ENCODE measurements at regions of chr1 and their contacts with region 1.

Region 1: GRCh38 chr1:234533975-234534876 is 55.2 kb upstream of the TARBP1 start:
- DNase-seq: peak; percentile 100
- H3K4me3 Mint-ChIP-seq: peak overlapping the region; percentile 31
- H3K27ac Mint-ChIP-seq: peak overlapping the region; percentile 93
- H3K4me1 Mint-ChIP-seq: peaks cover 43% of the 10 kb centered on the region
- H3K27me3 Mint-ChIP-seq: no peaks in the 10 kb centered on the region
- CTCF ChIP-seq: no peak

Region 2: GRCh38 chr1:234509452-234510328 is 24.5 kb before region 1 on chr1:
- CTCF ChIA-PET with region 1: interaction called, 17 read pairs
- POLR2A ChIA-PET with region 1: interaction called, 443 read pairs
- intact Hi-C with region 1: loop called (anchors 1 kb)
- DNase-seq: peak; percentile 84
- H3K4me3 Mint-ChIP-seq: peak overlapping the region; percentile 52
- H3K27ac Mint-ChIP-seq: peak overlapping the region; percentile 85
- H3K4me1 Mint-ChIP-seq: peaks cover 46% of the 10 kb centered on the region
- H3K27me3 Mint-ChIP-seq: no peaks in the 10 kb centered on the region
- CTCF ChIP-seq: no peak

Region 3: GRCh38 chr1:234553156-234553863 is 19.1 kb after region 1 on chr1:
- CTCF ChIA-PET with region 1: interaction called, 4 read pairs
- POLR2A ChIA-PET with region 1: interaction called, 13 read pairs
- intact Hi-C with region 1: no loop called
- DNase-seq: no peak
- H3K4me3 Mint-ChIP-seq: no peak overlapping the region
- H3K27ac Mint-ChIP-seq: no peak overlapping the region
- H3K4me1 Mint-ChIP-seq: no peaks in the 10 kb centered on the region
- H3K27me3 Mint-ChIP-seq: no peaks in the 10 kb centered on the region
- CTCF ChIP-seq: no peak

Region 4: GRCh38 chr1:234573711-234574299 is 39.6 kb after region 1 on chr1:
- CTCF ChIA-PET with region 1: interaction called, 6 read pairs
- POLR2A ChIA-PET with region 1: interaction called, 12 read pairs
- intact Hi-C with region 1: loop called (anchors 1 kb)
- DNase-seq: peak; percentile 77
- H3K4me3 Mint-ChIP-seq: no peak overlapping the region
- H3K27ac Mint-ChIP-seq: no peak overlapping the region
- H3K4me1 Mint-ChIP-seq: peaks cover 17% of the 10 kb centered on the region
- H3K27me3 Mint-ChIP-seq: no peaks in the 10 kb centered on the region
- CTCF ChIP-seq: no peak

Region 5: DNA sequence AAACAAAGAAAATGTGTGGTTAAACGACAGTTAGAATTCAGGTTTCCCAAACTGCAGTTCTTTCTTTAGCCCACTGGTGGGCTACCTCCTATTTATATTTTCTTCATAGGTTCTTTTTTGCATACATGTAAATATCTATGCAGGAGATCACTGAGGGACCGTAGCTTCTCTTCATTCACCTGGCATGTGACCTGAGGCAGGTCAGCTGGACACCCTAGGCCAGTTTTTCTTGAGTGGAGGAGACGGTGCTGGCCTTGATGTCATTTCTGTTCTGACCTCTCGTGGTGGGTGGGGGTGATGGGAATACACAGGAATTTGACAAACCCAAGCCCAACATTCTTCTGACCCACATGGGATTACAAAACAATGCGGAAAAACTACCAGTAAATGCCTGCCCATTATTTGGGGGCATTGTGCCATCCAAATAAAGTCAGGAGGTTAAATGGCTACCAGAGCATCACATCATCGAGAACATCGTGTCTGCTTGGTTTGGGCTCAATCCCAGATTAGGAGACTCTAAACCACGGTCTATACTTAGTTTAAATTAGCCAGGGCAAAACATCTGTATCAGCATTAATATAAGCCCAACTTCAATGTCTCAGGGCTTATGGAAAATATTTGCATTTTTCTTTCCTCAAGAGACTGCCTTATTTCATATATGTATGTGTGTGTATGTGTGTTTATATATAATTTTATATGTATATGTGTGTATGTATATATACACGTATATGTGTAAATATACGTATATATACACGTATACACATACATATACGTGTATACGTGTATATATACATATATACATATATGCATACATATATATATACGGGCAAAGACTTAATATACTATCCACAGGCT is 83.1 kb after region 1 on chr1:
- CTCF ChIA-PET with region 1: interaction called, 4 read pairs
- POLR2A ChIA-PET with region 1: interaction called, 178 read pairs
- intact Hi-C with region 1: no loop called
- DNase-seq: peak; percentile 80
- H3K4me3 Mint-ChIP-seq: no peak overlapping the region
- H3K27ac Mint-ChIP-seq: peak overlapping the region; percentile 99
- H3K4me1 Mint-ChIP-seq: peaks cover 70% of the 10 kb centered on the region
- H3K27me3 Mint-ChIP-seq: no peaks in the 10 kb centered on the region
- CTCF ChIP-seq: peak; percentile 28

Region 6: GRCh38 chr1:235075188-235075926 is 541.1 kb after region 1 on chr1:
- CTCF ChIA-PET with region 1: interaction called, 6 read pairs
- POLR2A ChIA-PET with region 1: interaction called, 49 read pairs
- intact Hi-C with region 1: no loop called
- DNase-seq: peak; percentile 92
- H3K4me3 Mint-ChIP-seq: no peak overlapping the region
- H3K27ac Mint-ChIP-seq: peak overlapping the region; percentile 52
- H3K4me1 Mint-ChIP-seq: peaks cover 30% of the 10 kb centered on the region
- H3K27me3 Mint-ChIP-seq: no peaks in the 10 kb centered on the region
- CTCF ChIP-seq: no peak

Measured in MCF 10A (cell line).